ENCODE measurements at regions of chr6 and their contacts with region 1.

Region 1: DNA sequence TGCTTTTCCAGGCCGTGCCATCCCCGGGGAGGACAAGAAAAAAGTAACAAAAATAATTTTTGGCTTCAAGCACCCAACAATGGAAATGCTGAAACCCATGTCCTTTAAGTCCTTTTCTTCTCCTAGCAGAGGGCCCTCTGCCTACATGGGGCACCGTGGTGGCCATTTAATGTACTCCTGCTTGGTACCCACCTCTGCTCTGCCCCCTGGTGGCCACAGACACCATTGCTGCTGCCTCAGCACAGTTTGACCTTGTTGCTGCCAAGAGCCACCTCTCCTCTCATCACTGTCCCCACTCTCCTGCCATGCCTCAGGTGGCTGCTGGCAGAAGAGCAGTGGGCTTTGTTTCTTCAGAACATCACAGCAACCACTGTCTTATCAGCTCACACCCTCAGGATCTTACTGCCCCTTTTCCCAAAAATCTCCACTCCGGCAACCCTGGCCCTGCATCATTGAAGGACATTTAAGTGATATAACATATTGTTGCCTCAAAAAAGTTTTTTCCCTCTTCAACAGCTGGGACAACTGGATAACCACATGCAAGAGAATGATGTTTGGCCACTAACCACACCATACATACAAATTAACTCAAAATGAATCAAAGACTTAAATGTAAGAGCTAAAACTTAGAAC is 12.9 kb upstream of the ARMC2 start:
- DNase-seq: peak; percentile 87 to 90 (median 89)
- ATAC-seq: peak; percentile 99
- H3K4me3 ChIP-seq: no peak overlapping the region
- H3K27ac ChIP-seq: no peak overlapping the region
- H3K4me1 ChIP-seq: no peaks in the 10 kb centered on the region
- H3K27me3 ChIP-seq: no peaks in the 10 kb centered on the region
- CTCF ChIP-seq: peak; percentile 96 to 99 (median 98)
- POLR2A ChIP-seq: no peak

Region 2: GRCh38 chr6:108541838-108542759 is 293.2 kb before region 1 on chr6:
- intact Hi-C with region 1: loop called (anchors 5 to 10 kb)
- DNase-seq: peak; percentile 57 to 71 (median 64)
- ATAC-seq: peak; percentile 93 to 97 (median 94)
- H3K4me3 ChIP-seq: no peak overlapping the region
- H3K27ac ChIP-seq: no peak overlapping the region
- H3K4me1 ChIP-seq: no peaks in the 10 kb centered on the region
- H3K27me3 ChIP-seq: no peaks in the 10 kb centered on the region
- CTCF ChIP-seq: peak; percentile 80 to 96 (median 83)
- POLR2A ChIP-seq: no peak

Region 3: GRCh38 chr6:108549732-108550131 is 285.6 kb before region 1 on chr6:
- intact Hi-C with region 1: loop called (anchors 5 to 10 kb)
- DNase-seq: no peak
- ATAC-seq: no peak
- H3K4me3 ChIP-seq: no peak overlapping the region
- H3K27ac ChIP-seq: no peak overlapping the region
- H3K4me1 ChIP-seq: peaks cover 0 to 2% (median under 1%) of the 10 kb centered on the region in 4 donors
- H3K27me3 ChIP-seq: no peaks in the 10 kb centered on the region
- CTCF ChIP-seq: no peak
- POLR2A ChIP-seq: no peak

Measured in right lobe of liver (tissue), 6 donors.